T-cell (primary cell): ENCODE measurements at regions of chr11 and their contacts with region 1.

Region 1: GRCh38 chr11:67613960-67614715 is 7.4 kb downstream of the NDUFV1 start:
- DNase-seq: peak; percentile 68 to 93 (median 84)
- ATAC-seq: peak; percentile 91 to 96 (median 94)
- H3K4me3 ChIP-seq: peak overlapping the region in 1 of 2 donors; percentile 64
- H3K4me3 Mint-ChIP-seq: peak overlapping the region; percentile 74 to 83 (median 76)
- H3K27ac ChIP-seq: peak overlapping the region; percentile 100
- H3K27ac Mint-ChIP-seq: peak overlapping the region; percentile 96 to 97
- H3K4me1 ChIP-seq: peaks cover 15 to 44% of the 10 kb centered on the region in 2 experiments
- H3K4me1 Mint-ChIP-seq: peaks cover 15 to 39% (median 23%) of the 10 kb centered on the region in 3 donors
- H3K27me3 ChIP-seq: peaks cover 0 to 9% of the 10 kb centered on the region in 2 experiments
- H3K27me3 Mint-ChIP-seq: no peaks in the 10 kb centered on the region

Region 2: GRCh38 chr11:67600324-67601029 is 13.7 kb before region 1 on chr11:
- CTCF ChIA-PET with region 1: no interaction called
- POLR2A ChIA-PET with region 1: interaction called in 1 of 2 experiments, 10 read pairs
- DNase-seq: no peak
- ATAC-seq: no peak
- H3K4me3 ChIP-seq: no peak overlapping the region
- H3K4me3 Mint-ChIP-seq: no peak overlapping the region
- H3K27ac ChIP-seq: no peak overlapping the region
- H3K27ac Mint-ChIP-seq: no peak overlapping the region
- H3K4me1 ChIP-seq: no peaks in the 10 kb centered on the region
- H3K4me1 Mint-ChIP-seq: peaks cover under 1 to 5% (median 2%) of the 10 kb centered on the region in 3 donors
- H3K27me3 ChIP-seq: peaks cover 0 to 21% of the 10 kb centered on the region in 2 experiments
- H3K27me3 Mint-ChIP-seq: peaks cover 15 to 24% of the 10 kb centered on the region in 2 donors

Region 3: DNA sequence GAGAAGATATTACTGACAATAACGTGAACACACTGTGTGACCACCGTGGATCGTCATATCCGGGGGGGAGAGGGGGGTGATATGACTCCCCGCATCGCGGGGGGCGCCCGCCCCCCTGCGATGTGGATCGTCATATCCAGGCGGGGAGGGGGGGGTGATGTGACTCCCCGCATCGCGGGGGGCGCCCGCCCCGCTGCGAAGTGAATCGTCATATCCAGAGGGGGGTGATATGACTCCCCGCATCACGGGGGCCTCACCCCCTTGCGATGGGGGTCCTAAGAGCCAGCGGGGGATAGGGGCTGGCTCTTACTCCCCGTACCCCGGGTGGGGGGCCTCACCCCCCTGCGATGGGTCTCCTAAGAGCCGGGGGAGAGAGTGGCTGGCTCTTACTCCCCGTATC is 369.8 kb after region 1 on chr11:
- CTCF ChIA-PET with region 1: no interaction called
- POLR2A ChIA-PET with region 1: no interaction called
- DNase-seq: no peak
- ATAC-seq: no peak
- H3K4me3 ChIP-seq: no peak overlapping the region
- H3K4me3 Mint-ChIP-seq: no peak overlapping the region
- H3K27ac ChIP-seq: no peak overlapping the region
- H3K27ac Mint-ChIP-seq: no peak overlapping the region
- H3K4me1 ChIP-seq: no peaks in the 10 kb centered on the region
- H3K4me1 Mint-ChIP-seq: no peaks in the 10 kb centered on the region
- H3K27me3 ChIP-seq: no peaks in the 10 kb centered on the region
- H3K27me3 Mint-ChIP-seq: peaks cover 7% of the 10 kb centered on the region in 2 donors